ENCODE measurements at regions of chr3 and their contacts with region 1.

Region 1: DNA sequence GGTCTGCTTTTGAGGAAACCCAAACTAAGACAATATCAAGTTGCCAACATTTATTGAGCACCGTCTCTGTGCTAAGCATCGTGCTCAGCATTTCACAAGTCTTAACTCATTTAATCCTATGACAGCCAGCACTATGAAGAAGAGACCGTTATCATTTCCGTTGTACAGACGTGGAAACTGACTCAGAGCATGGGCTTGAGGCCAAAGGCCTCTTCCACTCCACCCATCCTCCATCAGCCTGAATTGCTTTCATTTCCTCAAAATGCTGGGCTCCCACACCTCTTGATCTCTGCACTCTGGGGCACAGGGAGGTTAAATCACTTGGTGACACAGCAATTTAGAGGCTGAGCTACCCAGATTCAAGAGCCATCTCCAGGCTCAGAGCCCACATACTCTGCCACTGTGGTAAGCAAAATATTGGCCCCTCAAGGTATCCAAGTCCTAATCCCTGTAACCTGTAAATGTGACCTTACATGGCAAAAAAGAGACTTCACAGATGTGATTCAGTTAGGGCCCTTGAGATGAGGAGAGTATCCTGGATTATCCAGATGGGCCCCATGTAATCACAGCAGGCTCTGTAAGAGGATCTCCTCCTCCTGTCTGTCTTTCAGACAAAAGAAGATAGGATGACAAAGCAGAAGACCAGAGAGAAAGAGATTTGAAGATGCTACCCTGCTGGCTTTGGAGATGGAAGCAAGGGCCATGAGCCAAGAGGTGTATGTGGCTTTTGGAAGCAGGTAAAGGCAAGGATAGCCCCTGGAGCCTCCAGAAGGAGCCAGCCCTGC is 24.3 kb upstream of the FLNB start:
- DNase-seq: peak; percentile 79
- ATAC-seq: peak; percentile 99
- H3K4me3 Mint-ChIP-seq: no peak overlapping the region
- H3K27ac Mint-ChIP-seq: peak overlapping the region; percentile 91
- H3K4me1 Mint-ChIP-seq: peaks cover 23% of the 10 kb centered on the region
- H3K27me3 Mint-ChIP-seq: no peaks in the 10 kb centered on the region

Region 2: DNA sequence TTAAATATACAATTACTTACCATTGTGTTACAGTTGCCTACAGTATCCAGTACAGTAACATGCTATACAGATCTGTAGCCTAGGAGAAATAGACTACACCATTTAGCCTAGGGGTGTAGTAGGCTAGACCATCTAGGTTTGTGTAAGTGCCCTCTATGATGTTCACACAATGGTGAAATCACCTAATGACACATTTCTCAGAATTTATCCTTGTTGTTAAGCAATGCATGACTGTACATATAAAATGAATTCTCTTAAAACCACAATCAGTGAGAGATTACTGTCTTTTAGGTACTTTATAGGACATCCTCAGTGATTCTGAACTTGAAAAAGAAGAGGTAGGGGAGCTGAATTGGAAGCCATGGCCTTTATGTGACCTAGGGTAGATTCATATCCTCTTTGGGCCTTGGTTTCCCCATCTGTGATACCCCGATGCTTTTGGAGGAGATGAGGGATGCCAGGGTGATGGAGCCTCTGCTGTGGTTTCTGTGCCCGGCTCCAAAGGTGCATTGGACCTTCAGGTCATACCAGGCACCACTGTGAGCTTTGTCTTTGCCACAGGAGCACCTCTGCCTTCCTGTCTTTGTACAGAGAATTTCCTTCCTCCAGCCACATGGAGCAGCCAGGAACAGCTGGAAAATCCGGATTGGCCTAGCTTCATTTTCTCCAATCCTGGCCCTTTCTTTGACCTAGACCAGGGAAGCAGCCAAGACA is 27.6 kb before region 1 on chr3:
- CTCF ChIA-PET with region 1: interaction called, 4 read pairs
- POLR2A ChIA-PET with region 1: no interaction called
- intact Hi-C with region 1: loop called in 1 of 2 experiments (anchors 1 kb)
- DNase-seq: no peak
- ATAC-seq: peak; percentile 94
- H3K4me3 Mint-ChIP-seq: no peak overlapping the region
- H3K27ac Mint-ChIP-seq: no peak overlapping the region
- H3K4me1 Mint-ChIP-seq: peaks cover 4% of the 10 kb centered on the region
- H3K27me3 Mint-ChIP-seq: no peaks in the 10 kb centered on the region

Measured in activated CD4-positive, alpha-beta T cell treated with anti-CD3 and anti-CD28 coated beads for 36 hours (primary cell).